RWPE1 (cell line): ENCODE measurements at regions of chr20 and their contacts with region 1.

Region 1: DNA sequence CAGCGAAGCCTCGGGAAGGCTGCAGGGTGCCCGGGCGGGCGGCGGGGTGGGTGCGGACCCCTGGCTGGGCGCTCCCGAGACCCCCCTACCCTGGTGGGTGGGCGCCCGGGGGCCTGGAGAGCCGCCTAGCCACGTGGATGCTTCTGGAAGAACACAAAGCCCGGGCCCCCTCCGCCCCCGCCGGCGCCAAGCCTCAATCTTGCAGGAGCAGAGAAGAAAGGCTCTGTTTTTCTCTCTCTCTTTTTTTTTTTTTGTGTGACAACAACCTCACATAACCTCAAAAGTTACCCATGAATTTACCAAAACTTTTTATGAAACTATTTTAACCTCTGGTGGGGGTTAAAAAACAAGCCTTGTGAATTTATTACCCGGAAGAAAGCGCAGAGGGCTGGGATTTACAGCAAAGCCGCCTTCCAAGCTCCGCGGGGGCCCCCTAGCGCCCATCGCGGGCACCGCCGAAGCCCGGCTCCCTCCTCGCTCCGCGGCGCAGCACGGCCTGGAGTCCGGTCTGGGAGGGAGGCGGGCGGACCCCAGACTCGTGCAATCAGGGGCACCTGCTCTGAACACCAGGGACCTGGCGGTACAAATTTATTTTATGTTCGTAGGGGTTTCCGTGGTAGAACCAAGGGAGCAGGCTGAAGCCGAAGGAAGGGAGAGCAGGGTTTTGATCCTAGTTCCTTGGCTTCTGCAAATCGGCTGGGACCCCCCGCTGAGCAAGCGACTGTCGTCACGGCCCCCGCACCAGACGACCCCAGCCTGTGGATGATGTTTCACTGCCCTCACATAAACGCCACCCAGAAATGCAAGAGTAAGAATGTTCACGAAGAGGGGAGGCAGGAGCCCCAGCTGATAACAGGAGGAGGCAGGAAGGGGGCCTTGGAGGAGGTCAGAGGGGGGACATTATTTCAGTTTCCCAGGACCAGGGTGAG is 58.9 kb downstream of the ZNF831 start:
- DNase-seq: peak; percentile 92
- H3K27ac ChIP-seq: no peak overlapping the region
- CTCF ChIP-seq: peak; percentile 100

Region 2: GRCh38 chr20:58870239-58871014 is 352.1 kb before region 1 on chr20:
- CTCF ChIA-PET with region 1: interaction called, 40 read pairs
- POLR2A ChIA-PET with region 1: no interaction called
- DNase-seq: peak; percentile 92
- H3K27ac ChIP-seq: no peak overlapping the region
- CTCF ChIP-seq: peak; percentile 99

Region 3: GRCh38 chr20:59087829-59088433 is 134.6 kb before region 1 on chr20:
- CTCF ChIA-PET with region 1: interaction called, 63 read pairs
- POLR2A ChIA-PET with region 1: no interaction called
- DNase-seq: peak; percentile 88
- H3K27ac ChIP-seq: no peak overlapping the region
- CTCF ChIP-seq: peak; percentile 98

Region 4: GRCh38 chr20:59102841-59103299 is 119.6 kb before region 1 on chr20:
- CTCF ChIA-PET with region 1: interaction called, 11 read pairs
- POLR2A ChIA-PET with region 1: no interaction called
- DNase-seq: no peak
- H3K27ac ChIP-seq: no peak overlapping the region
- CTCF ChIP-seq: no peak

Region 5: DNA sequence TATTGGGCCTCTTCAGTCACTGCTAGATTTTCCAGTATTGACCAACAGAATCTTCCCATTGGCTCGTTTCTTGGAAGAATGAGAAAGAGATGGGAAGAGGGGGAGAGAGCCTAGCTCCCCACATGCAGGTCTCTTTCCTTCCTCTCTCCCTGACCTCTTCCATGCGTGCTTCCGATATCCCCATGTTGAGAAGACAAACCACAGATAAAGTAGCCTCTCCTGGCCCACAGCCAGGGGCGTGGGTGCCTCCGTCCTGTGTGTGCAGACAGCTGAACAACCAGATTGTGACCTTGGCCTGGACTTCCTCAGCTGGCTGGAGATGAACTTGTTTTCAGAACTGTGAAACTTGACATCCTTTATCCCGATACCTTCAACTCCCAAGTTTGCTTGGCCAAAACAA is 148.9 kb after region 1 on chr20:
- CTCF ChIA-PET with region 1: no interaction called
- POLR2A ChIA-PET with region 1: no interaction called
- DNase-seq: no peak
- H3K27ac ChIP-seq: no peak overlapping the region
- CTCF ChIP-seq: no peak